GM23248 (cell line): ENCODE measurements at regions of chr1 and their contacts with region 1.

Region 1: DNA sequence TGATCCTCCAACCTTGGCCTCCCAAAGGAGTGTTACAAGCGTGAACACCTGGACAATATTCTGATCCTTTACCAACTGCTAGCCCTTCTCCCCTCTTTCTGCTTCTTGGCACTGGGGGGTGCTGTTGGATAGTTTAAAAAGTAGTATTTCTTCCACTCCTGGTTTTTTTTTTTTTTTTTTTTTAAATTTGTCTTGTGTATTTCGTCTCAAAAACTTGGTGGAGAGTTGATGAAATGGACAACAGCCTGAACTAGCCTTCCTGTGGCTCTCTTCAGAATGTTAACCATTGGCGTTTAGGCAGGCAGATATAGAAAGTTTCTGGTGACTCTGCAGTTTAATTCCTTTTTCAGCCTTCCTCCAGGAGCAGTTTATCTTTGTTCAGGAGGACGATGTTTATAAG is 69.7 kb upstream of the USP24 start:
- DNase-seq: peak; percentile 72
- H3K4me3 ChIP-seq: no peak overlapping the region
- H3K27ac ChIP-seq: no peak overlapping the region
- H3K4me1 ChIP-seq: peaks cover 7% of the 10 kb centered on the region; the same call in 1 of the 2 replicates
- H3K27me3 ChIP-seq: no peaks in the 10 kb centered on the region

Region 2: GRCh38 chr1:55369474-55369873 is 84.6 kb after region 1 on chr1:
- in situ Hi-C with region 1: no loop called
- DNase-seq: peak; percentile 92
- H3K4me3 ChIP-seq: peak overlapping the region; percentile 26; the same call in 1 of the 2 replicates
- H3K27ac ChIP-seq: peak overlapping the region; percentile 10; the same call in 1 of the 2 replicates
- H3K4me1 ChIP-seq: peaks cover 9% of the 10 kb centered on the region
- H3K27me3 ChIP-seq: no peaks in the 10 kb centered on the region

Region 3: DNA sequence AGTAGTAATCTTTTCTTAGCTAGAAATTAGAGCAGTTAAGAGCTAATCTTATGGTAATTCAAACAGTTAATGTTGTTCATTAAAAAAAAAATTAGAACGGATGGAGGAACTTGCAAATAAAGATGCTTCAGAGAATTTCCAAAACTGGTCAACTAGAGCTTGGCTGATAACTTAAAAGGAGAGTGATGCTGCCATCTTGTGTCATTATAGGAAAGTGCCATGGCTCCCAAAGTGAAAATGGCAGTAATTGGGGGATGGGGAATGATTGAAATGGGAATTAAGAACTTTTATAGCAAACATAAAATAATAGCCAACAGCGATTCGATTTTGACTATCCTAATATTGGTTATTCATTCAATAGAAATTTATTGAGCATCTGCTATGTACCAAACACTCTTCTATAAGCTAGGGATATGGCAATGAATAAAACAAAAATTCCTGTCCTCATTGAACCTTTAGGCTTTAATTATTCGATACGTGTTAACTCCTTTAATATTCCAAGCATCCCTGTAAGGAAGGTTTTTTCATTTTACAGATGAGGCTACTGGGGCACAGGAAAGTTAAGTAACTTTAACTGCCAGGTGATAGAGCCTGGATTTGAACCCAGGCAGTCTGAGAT is 1300.2 kb after region 1 on chr1:
- in situ Hi-C with region 1: loop called (anchors 10 kb)
- DNase-seq: peak; percentile 81
- H3K4me3 ChIP-seq: no peak overlapping the region
- H3K27ac ChIP-seq: no peak overlapping the region
- H3K4me1 ChIP-seq: peaks cover 6% of the 10 kb centered on the region; the same call in 1 of the 2 replicates
- H3K27me3 ChIP-seq: no peaks in the 10 kb centered on the region